Right cardiac atrium (tissue), 5 donors: ENCODE measurements at regions of chr2 and their contacts with region 1.

Region 1: GRCh38 chr2:114729026-114729425 is 286.6 kb downstream of the DPP10 start:
- DNase-seq: no peak
- ATAC-seq: no peak
- H3K4me3 ChIP-seq: no peak overlapping the region
- H3K27ac ChIP-seq: no peak overlapping the region
- H3K4me1 ChIP-seq: no peaks in the 10 kb centered on the region
- H3K27me3 ChIP-seq: no peaks in the 10 kb centered on the region

Region 2: GRCh38 chr2:114127370-114127769 is 601.7 kb before region 1 on chr2:
- intact Hi-C with region 1: no loop called
- DNase-seq: no peak
- ATAC-seq: no peak
- H3K4me3 ChIP-seq: no peak overlapping the region
- H3K27ac ChIP-seq: no peak overlapping the region
- H3K4me1 ChIP-seq: no peaks in the 10 kb centered on the region
- H3K27me3 ChIP-seq: no peaks in the 10 kb centered on the region

Region 3: GRCh38 chr2:115083225-115083624 is 354.2 kb after region 1 on chr2:
- intact Hi-C with region 1: loop called in 1 of 4 experiments (anchors 5 kb)
- DNase-seq: no peak
- ATAC-seq: no peak
- H3K4me3 ChIP-seq: no peak overlapping the region
- H3K27ac ChIP-seq: no peak overlapping the region
- H3K4me1 ChIP-seq: no peaks in the 10 kb centered on the region
- H3K27me3 ChIP-seq: no peaks in the 10 kb centered on the region